CD4-positive, alpha-beta memory T cell (primary cell): ENCODE measurements at regions of chr1 and their contacts with region 1.

Region 1: GRCh38 chr1:66350001-66350547 is 183.9 kb upstream of the SGIP1 start:
- DNase-seq: peak; percentile 73 to 82 (median 77)
- H3K4me3 ChIP-seq: peak overlapping the region in 1 of 2 donors; percentile 11
- H3K4me3 Mint-ChIP-seq: peak overlapping the region; percentile 73 to 83 (median 80)
- H3K27ac ChIP-seq: peak overlapping the region; percentile 70
- H3K27ac Mint-ChIP-seq: peak overlapping the region; percentile 89 to 100 (median 97)
- H3K4me1 ChIP-seq: peaks cover 98% of the 10 kb centered on the region
- H3K4me1 Mint-ChIP-seq: peaks cover 82 to 97% (median 89%) of the 10 kb centered on the region in 4 donors
- H3K27me3 ChIP-seq: no peaks in the 10 kb centered on the region
- H3K27me3 Mint-ChIP-seq: no peaks in the 10 kb centered on the region

Region 2: GRCh38 chr1:66309006-66309741 is 40.9 kb before region 1 on chr1:
- CTCF ChIA-PET with region 1: no interaction called
- POLR2A ChIA-PET with region 1: no interaction called
- intact Hi-C with region 1: no loop called
- DNase-seq: no peak
- H3K4me3 ChIP-seq: no peak overlapping the region
- H3K4me3 Mint-ChIP-seq: no peak overlapping the region
- H3K27ac ChIP-seq: no peak overlapping the region
- H3K27ac Mint-ChIP-seq: no peak overlapping the region
- H3K4me1 ChIP-seq: no peaks in the 10 kb centered on the region
- H3K4me1 Mint-ChIP-seq: no peaks in the 10 kb centered on the region
- H3K27me3 ChIP-seq: no peaks in the 10 kb centered on the region
- H3K27me3 Mint-ChIP-seq: no peaks in the 10 kb centered on the region

Region 3: DNA sequence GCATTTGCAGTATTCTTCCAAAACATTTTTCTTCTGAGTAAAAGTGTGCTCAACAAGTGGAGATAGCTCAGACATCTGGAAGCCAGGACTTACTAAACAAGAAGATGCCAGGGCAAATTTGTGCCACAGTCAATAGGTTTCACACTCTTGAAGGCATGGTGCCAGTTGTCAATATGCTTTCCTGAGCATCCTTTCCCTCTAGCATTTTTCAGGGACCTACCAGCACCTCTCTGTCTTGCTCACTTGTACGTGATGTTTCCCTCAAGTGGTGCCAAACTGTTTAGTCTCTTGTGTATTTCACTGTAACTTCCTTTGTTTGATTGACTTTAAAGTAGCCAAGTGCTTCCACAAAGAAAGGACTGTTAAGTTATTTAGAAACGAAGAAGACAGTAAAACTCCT is 10.1 kb before region 1 on chr1:
- CTCF ChIA-PET with region 1: interaction called, 140 read pairs
- POLR2A ChIA-PET with region 1: interaction called, 471 read pairs
- intact Hi-C with region 1: loop called (anchors 1 kb)
- DNase-seq: no peak
- H3K4me3 ChIP-seq: peak overlapping the region in 1 of 2 donors; percentile 11
- H3K4me3 Mint-ChIP-seq: peak overlapping the region; percentile 52 to 84 (median 67)
- H3K27ac ChIP-seq: peak overlapping the region; percentile 49
- H3K27ac Mint-ChIP-seq: peak overlapping the region; percentile 61 to 94 (median 80)
- H3K4me1 ChIP-seq: peaks cover 88% of the 10 kb centered on the region
- H3K4me1 Mint-ChIP-seq: peaks cover 46 to 86% (median 68%) of the 10 kb centered on the region in 4 donors
- H3K27me3 ChIP-seq: no peaks in the 10 kb centered on the region
- H3K27me3 Mint-ChIP-seq: no peaks in the 10 kb centered on the region

Region 4: DNA sequence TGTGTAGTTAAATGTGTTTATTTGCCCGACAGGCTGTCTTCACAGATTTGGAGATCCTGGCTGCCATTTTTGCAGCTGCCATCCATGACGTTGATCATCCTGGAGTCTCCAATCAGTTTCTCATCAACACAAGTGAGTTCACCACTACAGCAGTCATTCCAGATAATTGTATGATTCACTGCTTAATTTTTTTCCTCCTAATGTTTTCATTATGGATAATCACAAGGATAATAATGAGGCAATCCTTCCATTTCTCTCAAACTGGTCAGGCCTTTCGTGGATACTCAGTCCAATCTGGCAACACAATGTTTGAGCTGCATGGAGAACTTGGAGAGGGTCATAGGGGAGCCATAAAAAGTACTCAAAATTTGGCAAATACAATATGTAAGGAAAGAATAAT is 15.6 kb after region 1 on chr1:
- CTCF ChIA-PET with region 1: interaction called, 12 read pairs
- POLR2A ChIA-PET with region 1: interaction called, 216 read pairs
- intact Hi-C with region 1: no loop called
- DNase-seq: no peak
- H3K4me3 ChIP-seq: no peak overlapping the region
- H3K4me3 Mint-ChIP-seq: no peak overlapping the region
- H3K27ac ChIP-seq: no peak overlapping the region
- H3K27ac Mint-ChIP-seq: peak overlapping the region; percentile 30 to 76 (median 64)
- H3K4me1 ChIP-seq: peaks cover 76% of the 10 kb centered on the region
- H3K4me1 Mint-ChIP-seq: peaks cover 46 to 86% (median 63%) of the 10 kb centered on the region in 4 donors
- H3K27me3 ChIP-seq: no peaks in the 10 kb centered on the region
- H3K27me3 Mint-ChIP-seq: no peaks in the 10 kb centered on the region

Region 5: GRCh38 chr1:66374561-66375111 is 24.6 kb after region 1 on chr1:
- CTCF ChIA-PET with region 1: interaction called, 4 read pairs
- POLR2A ChIA-PET with region 1: interaction called, 216 read pairs
- intact Hi-C with region 1: loop called (anchors 1 kb)
- DNase-seq: peak; percentile 51 to 66 (median 54)
- H3K4me3 ChIP-seq: no peak overlapping the region
- H3K4me3 Mint-ChIP-seq: peak overlapping the region; percentile 47 to 86 (median 68)
- H3K27ac ChIP-seq: peak overlapping the region; percentile 58
- H3K27ac Mint-ChIP-seq: peak overlapping the region; percentile 81 to 99 (median 93)
- H3K4me1 ChIP-seq: peaks cover 69% of the 10 kb centered on the region
- H3K4me1 Mint-ChIP-seq: peaks cover 58 to 72% (median 65%) of the 10 kb centered on the region in 4 donors
- H3K27me3 ChIP-seq: no peaks in the 10 kb centered on the region
- H3K27me3 Mint-ChIP-seq: no peaks in the 10 kb centered on the region